Brain microvascular endothelial cell (primary cell): ENCODE measurements at regions of chr7 and their contacts with region 1.

Region 1: DNA sequence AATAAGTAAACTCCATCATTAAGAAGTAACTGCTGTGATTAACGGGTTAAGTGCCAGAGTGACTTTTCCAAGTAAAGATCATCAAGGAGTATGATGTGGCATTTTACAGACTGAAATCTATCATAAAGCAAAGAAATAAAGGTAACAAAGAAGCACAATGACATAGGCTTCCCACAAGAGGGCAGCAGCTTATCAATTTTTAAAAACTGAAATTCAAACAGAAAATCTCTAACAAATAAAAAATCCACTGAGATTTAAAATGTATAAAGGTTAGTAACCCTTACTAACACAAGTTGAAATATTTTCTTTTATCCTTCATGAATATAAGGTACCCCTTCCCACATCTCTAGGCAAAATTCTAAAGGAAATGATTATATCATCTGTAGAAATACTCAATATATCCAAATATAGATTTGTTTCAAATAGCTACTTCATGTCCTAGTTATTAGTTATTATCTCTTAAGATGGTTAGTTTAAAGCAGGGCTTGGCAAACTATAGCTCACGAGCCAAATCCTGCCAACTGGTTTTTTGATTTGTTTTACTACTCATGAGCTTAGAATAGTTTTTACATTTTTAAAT is 29.2 kb downstream of the FAM3C start:
- DNase-seq: no peak
- H3K4me3 ChIP-seq: no peak overlapping the region
- H3K27ac ChIP-seq: no peak overlapping the region
- H3K27me3 ChIP-seq: no peaks in the 10 kb centered on the region
- CTCF ChIP-seq: peak; percentile 50

Region 2: GRCh38 chr7:121116396-121116795 is 250.5 kb before region 1 on chr7:
- in situ Hi-C with region 1: no loop called
- DNase-seq: no peak
- H3K4me3 ChIP-seq: no peak overlapping the region
- H3K27ac ChIP-seq: no peak overlapping the region
- H3K27me3 ChIP-seq: no peaks in the 10 kb centered on the region
- CTCF ChIP-seq: no peak

Region 3: GRCh38 chr7:121410829-121411596 is 44.1 kb after region 1 on chr7:
- in situ Hi-C with region 1: no loop called
- DNase-seq: no peak
- H3K4me3 ChIP-seq: no peak overlapping the region
- H3K27ac ChIP-seq: no peak overlapping the region
- H3K27me3 ChIP-seq: no peaks in the 10 kb centered on the region
- CTCF ChIP-seq: no peak

Region 4: GRCh38 chr7:121547544-121548092 is 180.7 kb after region 1 on chr7:
- in situ Hi-C with region 1: loop called (anchors 25 kb)
- DNase-seq: peak; percentile 40
- H3K4me3 ChIP-seq: no peak overlapping the region
- H3K27ac ChIP-seq: no peak overlapping the region
- H3K27me3 ChIP-seq: no peaks in the 10 kb centered on the region
- CTCF ChIP-seq: peak; percentile 58